ENCODE measurements at regions of chr2 and their contacts with region 1.

Region 1: DNA sequence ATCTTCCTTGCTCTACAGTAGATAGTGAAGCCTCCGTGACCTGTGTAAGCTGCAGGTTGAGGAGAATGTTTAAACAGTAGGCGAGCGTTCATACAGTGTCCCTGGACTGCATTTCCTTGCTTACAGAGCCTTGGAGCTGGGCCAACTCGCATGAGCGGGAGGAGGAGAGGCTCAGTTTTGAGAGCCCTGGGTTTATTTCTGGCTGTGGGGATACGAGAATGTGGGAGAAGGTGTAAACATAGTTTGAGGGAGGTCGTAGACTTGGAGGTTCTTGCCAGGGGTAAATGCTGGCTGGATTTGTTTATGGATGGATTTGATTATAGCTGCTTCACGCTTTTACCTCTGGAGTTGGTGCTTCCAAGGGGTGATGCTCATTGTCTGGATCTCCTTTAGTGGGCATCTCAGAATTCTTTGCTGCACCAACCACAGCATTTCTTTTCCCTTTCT is 20.8 kb downstream of the CRIM1 start:
- DNase-seq: peak; percentile 29 to 37
- H3K4me3 ChIP-seq: no peak overlapping the region
- H3K27ac ChIP-seq: peak overlapping the region; percentile 88
- H3K4me1 ChIP-seq: peaks cover 98% of the 10 kb centered on the region
- H3K27me3 ChIP-seq: no peaks in the 10 kb centered on the region
- CTCF ChIP-seq: no peak

Region 2: DNA sequence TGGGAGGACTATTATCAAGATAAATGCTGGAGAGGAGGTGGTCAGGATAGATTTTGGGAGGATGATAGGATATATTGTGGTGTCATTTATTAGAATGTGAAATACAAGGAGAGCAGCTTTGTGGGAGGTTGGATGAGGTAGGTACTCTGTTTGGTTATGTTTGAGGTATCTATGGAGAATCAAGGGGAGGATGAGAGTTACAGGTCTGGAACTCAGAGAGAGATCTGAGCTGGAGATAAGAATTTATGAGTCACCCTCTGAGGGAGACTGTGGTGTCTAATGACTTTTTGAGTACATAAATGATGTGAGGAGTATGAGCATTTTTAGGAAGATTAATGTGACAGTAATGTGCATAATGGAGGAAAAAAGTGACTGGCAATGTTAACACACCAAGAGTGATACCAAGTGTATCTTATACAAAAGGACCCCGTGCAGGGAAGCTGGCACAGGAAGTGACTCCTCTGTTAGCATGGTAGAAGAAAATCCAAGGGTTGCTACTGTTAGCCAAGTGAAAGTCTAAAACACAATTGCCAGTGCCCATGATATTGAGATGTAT is 27.4 kb after region 1 on chr2:
- CTCF ChIA-PET with region 1: interaction called, 3 read pairs
- POLR2A ChIA-PET with region 1: no interaction called
- intact Hi-C with region 1: loop called (anchors 1 kb)
- DNase-seq: peak; percentile 39 to 97
- H3K4me3 ChIP-seq: no peak overlapping the region
- H3K27ac ChIP-seq: peak overlapping the region; percentile 43
- H3K4me1 ChIP-seq: peaks cover 19% of the 10 kb centered on the region
- H3K27me3 ChIP-seq: no peaks in the 10 kb centered on the region
- CTCF ChIP-seq: no peak

Region 3: GRCh38 chr2:36486546-36487044 is 110.3 kb after region 1 on chr2:
- CTCF ChIA-PET with region 1: no interaction called
- POLR2A ChIA-PET with region 1: interaction called, 3 read pairs
- intact Hi-C with region 1: loop called (anchors 1 kb)
- DNase-seq: peak; percentile 15 to 89
- H3K4me3 ChIP-seq: no peak overlapping the region
- H3K27ac ChIP-seq: peak overlapping the region; percentile 42
- H3K4me1 ChIP-seq: peaks cover 72% of the 10 kb centered on the region
- H3K27me3 ChIP-seq: no peaks in the 10 kb centered on the region
- CTCF ChIP-seq: no peak